Caco-2 (cell line): ENCODE measurements at regions of chr11 and their contacts with region 1.

Region 1: DNA sequence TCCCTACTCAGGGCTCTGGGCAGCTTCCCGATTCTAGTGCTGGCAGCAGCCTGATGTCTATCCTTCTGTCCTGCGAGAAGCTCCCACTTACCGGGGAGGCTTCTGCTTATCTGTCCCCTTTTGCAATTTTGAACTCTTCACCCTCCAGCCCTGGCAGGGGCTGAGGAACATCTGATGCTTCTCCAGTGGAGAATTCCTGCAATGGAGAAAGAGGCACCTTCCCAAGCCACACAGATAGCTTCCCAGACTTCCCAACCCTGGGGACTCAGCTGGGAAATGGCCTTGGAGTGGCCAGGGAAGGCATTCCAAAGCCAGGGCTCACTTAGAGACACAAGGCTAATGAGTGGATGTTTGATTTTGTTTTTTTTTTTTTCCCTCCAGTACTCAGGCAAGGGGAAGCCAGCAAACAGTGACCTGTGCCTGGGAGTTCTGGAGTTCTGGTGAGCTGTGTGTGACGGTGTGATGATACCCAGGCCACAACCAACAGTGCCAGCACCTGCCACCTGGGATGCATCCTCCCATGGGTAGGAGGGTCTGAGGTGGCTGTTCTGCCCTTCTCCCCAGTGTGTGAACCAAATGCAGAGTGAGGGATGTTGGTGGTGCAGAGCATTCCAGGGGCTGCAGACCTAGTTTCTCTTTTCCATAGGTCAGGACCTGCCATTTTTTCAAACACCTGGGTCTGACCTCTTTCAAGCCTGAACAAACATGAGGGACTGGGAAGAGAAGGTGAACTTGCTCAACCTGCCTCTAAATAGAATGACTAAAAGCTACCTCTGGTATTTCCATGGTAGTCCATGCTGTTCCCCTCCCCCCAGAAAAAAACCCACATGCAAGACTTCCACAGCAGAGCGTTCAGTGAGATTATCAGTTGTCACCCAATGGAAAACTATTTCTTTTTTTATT is 95.1 kb downstream of the CCDC81 start:
- DNase-seq: peak; percentile 89 to 91
- H3K4me3 ChIP-seq: no peak overlapping the region
- H3K4me3 Mint-ChIP-seq: peak overlapping the region; percentile 36
- H3K27ac Mint-ChIP-seq: peak overlapping the region; percentile 70
- H3K4me1 ChIP-seq: peaks cover 44% of the 10 kb centered on the region
- H3K4me1 Mint-ChIP-seq: peaks cover 58% of the 10 kb centered on the region
- H3K27me3 ChIP-seq: no peaks in the 10 kb centered on the region
- H3K27me3 Mint-ChIP-seq: no peaks in the 10 kb centered on the region
- CTCF ChIP-seq: no peak

Region 2: DNA sequence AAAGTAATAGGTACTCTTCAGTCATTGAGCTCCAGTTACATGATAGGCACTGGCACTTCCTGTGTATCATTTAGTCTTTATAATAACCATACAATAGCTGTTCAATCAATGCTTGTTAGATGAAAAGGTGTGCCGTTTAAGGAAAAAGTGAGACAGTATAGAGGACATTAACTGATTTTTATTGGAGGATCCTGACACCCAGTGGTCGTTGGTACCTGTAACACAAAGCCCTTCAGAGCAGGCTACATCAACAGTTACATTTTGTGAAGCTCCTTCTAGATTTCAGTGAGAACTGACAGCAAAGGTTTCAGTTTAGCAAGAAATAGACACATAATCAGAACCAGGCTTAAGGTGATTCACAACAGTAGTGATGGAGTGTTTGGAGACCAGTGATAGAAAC is 50.8 kb before region 1 on chr11:
- CTCF ChIA-PET with region 1: no interaction called
- POLR2A ChIA-PET with region 1: no interaction called
- intact Hi-C with region 1: no loop called
- DNase-seq: peak in 1 of 2 experiments; percentile 46
- H3K4me3 ChIP-seq: no peak overlapping the region
- H3K4me3 Mint-ChIP-seq: no peak overlapping the region
- H3K27ac Mint-ChIP-seq: no peak overlapping the region
- H3K4me1 ChIP-seq: peaks cover 19% of the 10 kb centered on the region
- H3K4me1 Mint-ChIP-seq: peaks cover 33% of the 10 kb centered on the region
- H3K27me3 ChIP-seq: no peaks in the 10 kb centered on the region
- H3K27me3 Mint-ChIP-seq: no peaks in the 10 kb centered on the region
- CTCF ChIP-seq: peak; percentile 31 to 61

Region 3: DNA sequence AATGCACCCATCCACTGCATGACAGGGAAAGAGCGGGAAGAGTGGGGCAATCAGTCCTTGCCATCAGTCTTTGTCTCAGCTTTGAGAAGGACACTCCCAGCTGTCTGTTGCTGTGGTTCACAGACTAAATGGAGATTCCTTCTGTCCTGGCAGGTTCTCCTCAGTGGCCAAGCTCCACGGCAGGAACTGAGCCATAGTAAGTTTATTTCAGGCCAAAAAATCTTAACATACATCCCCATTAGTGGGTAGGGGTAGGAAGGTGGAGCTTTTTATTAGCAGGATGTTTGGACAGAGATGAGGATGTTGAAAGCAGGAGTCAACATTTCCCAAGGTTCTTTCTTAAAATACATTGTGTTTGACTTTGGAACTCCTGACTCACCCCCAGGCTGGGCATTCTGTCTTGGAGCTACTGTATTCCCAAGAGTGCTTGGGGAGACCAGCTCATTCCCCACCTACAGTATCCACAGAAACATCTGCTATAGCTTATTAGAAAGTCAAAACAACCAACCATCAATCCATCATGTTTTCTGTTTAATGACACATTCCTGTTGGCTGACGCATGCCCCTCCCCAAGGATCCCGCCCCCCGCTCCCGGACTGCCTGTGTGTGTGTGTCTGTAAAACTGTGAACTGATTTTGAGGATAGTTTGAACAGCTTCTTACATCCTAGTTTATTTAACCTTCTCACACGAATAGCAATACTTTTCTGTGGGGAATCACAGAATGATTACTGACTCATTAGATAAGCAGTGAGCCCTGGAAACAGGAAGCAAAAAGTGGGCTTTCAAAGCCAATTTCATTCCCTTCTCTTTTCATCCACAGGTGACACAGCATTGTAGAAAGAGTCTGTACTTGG is 14.4 kb after region 1 on chr11:
- CTCF ChIA-PET with region 1: interaction called, 7 read pairs
- POLR2A ChIA-PET with region 1: interaction called, 23 read pairs
- intact Hi-C with region 1: loop called (anchors 1 kb)
- DNase-seq: peak; percentile 90 to 93
- H3K4me3 ChIP-seq: no peak overlapping the region
- H3K4me3 Mint-ChIP-seq: peak overlapping the region; percentile 1
- H3K27ac Mint-ChIP-seq: peak overlapping the region; percentile 77
- H3K4me1 ChIP-seq: peaks cover 54% of the 10 kb centered on the region
- H3K4me1 Mint-ChIP-seq: peaks cover 57% of the 10 kb centered on the region
- H3K27me3 ChIP-seq: no peaks in the 10 kb centered on the region
- H3K27me3 Mint-ChIP-seq: no peaks in the 10 kb centered on the region
- CTCF ChIP-seq: no peak

Region 4: DNA sequence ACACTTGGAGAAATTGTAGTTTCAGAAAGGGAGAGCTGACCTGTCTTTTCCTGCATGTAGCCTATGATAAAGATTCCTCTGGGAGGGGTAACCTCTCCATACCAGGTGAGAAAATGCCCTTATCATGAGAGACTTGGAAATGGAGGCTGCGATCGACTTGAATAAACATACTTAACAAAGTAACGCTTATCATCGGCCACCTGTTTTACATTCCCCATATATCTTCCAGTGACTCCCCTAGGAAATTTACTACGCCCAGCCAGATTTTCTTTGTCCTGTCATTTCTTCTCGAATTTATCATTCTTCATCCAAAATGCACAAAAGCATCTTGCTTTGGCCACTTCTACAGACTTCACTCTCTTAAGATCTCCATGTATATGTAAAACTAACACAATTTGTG is 48.5 kb after region 1 on chr11:
- CTCF ChIA-PET with region 1: no interaction called
- POLR2A ChIA-PET with region 1: interaction called, 3 read pairs
- intact Hi-C with region 1: loop called (anchors 1 kb)
- DNase-seq: peak; percentile 75 to 76
- H3K4me3 ChIP-seq: no peak overlapping the region
- H3K4me3 Mint-ChIP-seq: peak overlapping the region; percentile 16
- H3K27ac Mint-ChIP-seq: peak overlapping the region; percentile 68
- H3K4me1 ChIP-seq: peaks cover 94% of the 10 kb centered on the region
- H3K4me1 Mint-ChIP-seq: peaks cover 48% of the 10 kb centered on the region
- H3K27me3 ChIP-seq: no peaks in the 10 kb centered on the region
- H3K27me3 Mint-ChIP-seq: no peaks in the 10 kb centered on the region
- CTCF ChIP-seq: no peak

Region 5: DNA sequence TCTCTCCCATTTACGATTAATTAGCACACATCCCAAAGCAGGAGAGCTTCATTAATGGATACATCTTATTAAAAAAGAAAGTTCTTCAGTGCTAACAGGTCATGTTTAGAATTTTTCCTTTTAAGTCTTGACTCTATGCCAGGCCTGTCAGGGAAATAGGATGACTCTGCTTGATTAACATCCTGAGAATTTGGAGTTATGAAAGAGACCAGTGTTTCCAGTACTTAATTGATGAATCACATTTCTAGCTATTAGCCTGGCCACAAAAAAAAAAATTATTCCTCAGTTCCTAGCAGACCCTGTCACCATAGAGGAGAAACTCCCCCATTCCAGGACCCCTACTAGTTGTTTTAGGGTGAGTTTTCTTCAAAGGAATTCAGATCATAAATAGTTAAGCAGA is 226.3 kb after region 1 on chr11:
- CTCF ChIA-PET with region 1: no interaction called
- POLR2A ChIA-PET with region 1: no interaction called
- intact Hi-C with region 1: no loop called
- DNase-seq: no peak
- H3K4me3 ChIP-seq: no peak overlapping the region
- H3K4me3 Mint-ChIP-seq: no peak overlapping the region
- H3K27ac Mint-ChIP-seq: no peak overlapping the region
- H3K4me1 ChIP-seq: peaks cover 31% of the 10 kb centered on the region
- H3K4me1 Mint-ChIP-seq: peaks cover 7% of the 10 kb centered on the region
- H3K27me3 ChIP-seq: no peaks in the 10 kb centered on the region
- H3K27me3 Mint-ChIP-seq: no peaks in the 10 kb centered on the region
- CTCF ChIP-seq: no peak